IMR-90 (cell line): ENCODE measurements at regions of chr4 and their contacts with region 1.

Region 1: GRCh38 chr4:54384563-54384962 is 155.5 kb downstream of the PDGFRA start:
- DNase-seq: peak; percentile 39
- ATAC-seq: peak; percentile 85
- H3K4me3 ChIP-seq: no peak overlapping the region
- H3K27ac ChIP-seq: no peak overlapping the region
- H3K4me1 ChIP-seq: no peaks in the 10 kb centered on the region
- H3K27me3 ChIP-seq: no peaks in the 10 kb centered on the region
- CTCF ChIP-seq: peak; percentile 44
- POLR2A ChIP-seq: no peak
- RAD21 ChIP-seq: peak; percentile 58

Region 2: DNA sequence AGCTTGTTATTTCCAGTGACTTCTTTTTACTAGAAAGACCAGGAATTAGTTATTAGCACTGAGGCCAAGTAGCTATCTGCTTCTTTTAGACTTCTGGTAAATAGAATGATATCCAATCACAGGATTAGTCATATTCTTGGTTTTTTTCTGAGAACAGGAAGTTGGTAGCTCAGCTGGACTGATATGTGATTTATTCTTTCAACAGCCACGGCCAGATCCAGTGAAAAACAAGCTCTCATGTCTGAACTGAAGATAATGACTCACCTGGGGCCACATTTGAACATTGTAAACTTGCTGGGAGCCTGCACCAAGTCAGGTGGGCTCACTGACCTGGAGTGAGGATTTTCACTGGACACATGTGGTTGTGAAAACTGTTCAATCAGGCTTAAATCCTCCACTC is 106.9 kb before region 1 on chr4:
- CTCF ChIA-PET with region 1: no interaction called
- POLR2A ChIA-PET with region 1: no interaction called
- dilution Hi-C with region 1: no loop called
- in situ Hi-C with region 1: no loop called
- intact Hi-C with region 1: no loop called
- DNase-seq: peak; percentile 92
- ATAC-seq: peak; percentile 25
- H3K4me3 ChIP-seq: no peak overlapping the region
- H3K27ac ChIP-seq: peak overlapping the region; percentile 60
- H3K4me1 ChIP-seq: peaks cover 17% of the 10 kb centered on the region
- H3K27me3 ChIP-seq: no peaks in the 10 kb centered on the region
- CTCF ChIP-seq: no peak
- POLR2A ChIP-seq: no peak
- RAD21 ChIP-seq: no peak; the same call in 1 of the 2 replicates

Region 3: DNA sequence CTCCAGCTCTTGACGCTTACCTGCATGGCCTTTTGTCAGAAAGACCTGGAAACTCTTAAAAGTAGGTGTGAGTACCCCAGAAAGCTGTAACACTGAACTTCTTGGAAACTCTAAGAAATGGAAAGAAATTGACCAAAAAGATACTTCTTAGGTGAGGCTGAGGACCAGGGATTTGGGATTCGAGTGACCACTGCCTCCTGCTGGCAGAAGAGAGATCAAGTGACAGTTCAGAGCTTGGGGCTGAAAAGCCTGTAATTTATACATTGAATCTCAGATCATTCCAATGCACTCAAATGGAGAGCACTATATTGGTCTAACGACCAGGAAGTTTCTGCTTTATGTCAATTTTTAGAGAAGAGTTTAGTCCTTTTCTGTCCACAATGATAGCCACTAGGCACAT is 49.1 kb after region 1 on chr4:
- CTCF ChIA-PET with region 1: interaction called, 5 read pairs
- POLR2A ChIA-PET with region 1: no interaction called
- dilution Hi-C with region 1: no loop called
- in situ Hi-C with region 1: no loop called
- intact Hi-C with region 1: loop called (anchors 2 kb)
- DNase-seq: peak; percentile 37
- ATAC-seq: peak; percentile 77; the same call in 1 of the 2 replicates
- H3K4me3 ChIP-seq: no peak overlapping the region
- H3K27ac ChIP-seq: no peak overlapping the region
- H3K4me1 ChIP-seq: no peaks in the 10 kb centered on the region
- H3K27me3 ChIP-seq: peaks cover 21% of the 10 kb centered on the region
- CTCF ChIP-seq: peak; percentile 50
- POLR2A ChIP-seq: no peak
- RAD21 ChIP-seq: peak; percentile 52

Region 4: DNA sequence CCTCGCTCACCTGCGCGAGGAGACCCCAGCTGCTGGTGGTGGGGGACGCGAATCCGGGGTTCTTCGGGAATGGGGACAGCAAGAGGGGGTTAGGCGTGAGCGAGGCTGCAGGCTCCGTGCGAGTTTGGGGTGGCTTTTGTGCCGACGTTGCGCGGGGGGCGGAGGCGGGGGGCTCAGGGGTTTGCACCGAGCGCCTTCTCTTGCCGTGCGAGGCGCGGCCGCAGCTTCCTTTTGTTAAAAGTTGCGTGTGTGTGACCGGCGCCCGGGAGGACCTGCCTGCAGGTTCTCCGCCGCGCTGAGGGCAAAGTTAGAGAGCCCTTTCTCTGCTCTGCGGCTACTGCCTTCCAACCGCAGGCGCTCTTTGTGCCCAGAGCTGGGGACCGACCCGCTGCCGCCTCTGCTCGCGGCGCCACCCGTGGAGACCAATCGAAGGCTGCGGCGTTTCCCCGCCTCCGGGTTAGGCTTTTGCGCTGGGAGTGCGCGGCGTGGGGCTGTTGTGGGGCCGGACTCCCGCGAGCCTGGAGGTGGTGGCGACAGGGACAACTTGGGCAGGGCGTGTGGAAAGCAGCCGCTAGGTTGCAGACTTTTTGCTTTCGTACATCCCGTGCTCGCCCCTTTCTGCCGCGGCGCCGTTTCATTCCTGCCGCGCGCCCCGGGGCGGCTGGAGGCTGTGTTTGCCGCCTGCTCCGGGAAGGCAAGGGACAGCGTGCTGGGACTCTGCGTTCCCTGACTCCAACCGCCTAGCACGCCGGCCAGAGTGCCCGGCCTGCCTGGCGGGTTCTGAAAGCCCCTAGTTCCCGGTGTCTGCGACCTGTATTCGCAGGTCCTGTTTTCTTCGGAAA is 273.9 kb after region 1 on chr4:
- CTCF ChIA-PET with region 1: no interaction called
- POLR2A ChIA-PET with region 1: no interaction called
- dilution Hi-C with region 1: no loop called
- in situ Hi-C with region 1: no loop called
- intact Hi-C with region 1: loop called (anchors 5 kb)
- DNase-seq: peak; percentile 36
- ATAC-seq: peak; percentile 60
- H3K4me3 ChIP-seq: peak overlapping the region; percentile 74
- H3K27ac ChIP-seq: peak overlapping the region; percentile 36; the same call in 1 of the 2 replicates
- H3K4me1 ChIP-seq: peaks cover 16% of the 10 kb centered on the region
- H3K27me3 ChIP-seq: peaks cover 22% of the 10 kb centered on the region
- CTCF ChIP-seq: 0 out of 2 replicates have a peak, but pooled peaks have one; percentile 15
- POLR2A ChIP-seq: no peak
- RAD21 ChIP-seq: no peak

Region 5: GRCh38 chr4:54840992-54841768 is 456.6 kb after region 1 on chr4:
- CTCF ChIA-PET with region 1: no interaction called
- POLR2A ChIA-PET with region 1: no interaction called
- dilution Hi-C with region 1: no loop called
- in situ Hi-C with region 1: no loop called
- intact Hi-C with region 1: loop called (anchors 10 kb)
- DNase-seq: peak; percentile 2
- ATAC-seq: peak; percentile 68
- H3K4me3 ChIP-seq: no peak overlapping the region
- H3K27ac ChIP-seq: no peak overlapping the region
- H3K4me1 ChIP-seq: no peaks in the 10 kb centered on the region; the same call in 1 of the 2 replicates
- H3K27me3 ChIP-seq: peaks cover 3% of the 10 kb centered on the region; the same call in 1 of the 2 replicates
- CTCF ChIP-seq: peak; percentile 29
- POLR2A ChIP-seq: no peak
- RAD21 ChIP-seq: peak; percentile 49

Region 6: GRCh38 chr4:55312489-55313101 is 928.0 kb after region 1 on chr4:
- CTCF ChIA-PET with region 1: interaction called, 3 read pairs
- POLR2A ChIA-PET with region 1: no interaction called
- dilution Hi-C with region 1: no loop called
- in situ Hi-C with region 1: loop called (anchors 25 kb)
- intact Hi-C with region 1: no loop called
- DNase-seq: peak; percentile 58
- ATAC-seq: peak; percentile 69
- H3K4me3 ChIP-seq: no peak overlapping the region
- H3K27ac ChIP-seq: no peak overlapping the region
- H3K4me1 ChIP-seq: no peaks in the 10 kb centered on the region
- H3K27me3 ChIP-seq: peaks cover 6% of the 10 kb centered on the region
- CTCF ChIP-seq: peak; percentile 66
- POLR2A ChIP-seq: no peak
- RAD21 ChIP-seq: peak; percentile 56